ENCODE measurements at regions of chr17 and their contacts with region 1.

Region 1: DNA sequence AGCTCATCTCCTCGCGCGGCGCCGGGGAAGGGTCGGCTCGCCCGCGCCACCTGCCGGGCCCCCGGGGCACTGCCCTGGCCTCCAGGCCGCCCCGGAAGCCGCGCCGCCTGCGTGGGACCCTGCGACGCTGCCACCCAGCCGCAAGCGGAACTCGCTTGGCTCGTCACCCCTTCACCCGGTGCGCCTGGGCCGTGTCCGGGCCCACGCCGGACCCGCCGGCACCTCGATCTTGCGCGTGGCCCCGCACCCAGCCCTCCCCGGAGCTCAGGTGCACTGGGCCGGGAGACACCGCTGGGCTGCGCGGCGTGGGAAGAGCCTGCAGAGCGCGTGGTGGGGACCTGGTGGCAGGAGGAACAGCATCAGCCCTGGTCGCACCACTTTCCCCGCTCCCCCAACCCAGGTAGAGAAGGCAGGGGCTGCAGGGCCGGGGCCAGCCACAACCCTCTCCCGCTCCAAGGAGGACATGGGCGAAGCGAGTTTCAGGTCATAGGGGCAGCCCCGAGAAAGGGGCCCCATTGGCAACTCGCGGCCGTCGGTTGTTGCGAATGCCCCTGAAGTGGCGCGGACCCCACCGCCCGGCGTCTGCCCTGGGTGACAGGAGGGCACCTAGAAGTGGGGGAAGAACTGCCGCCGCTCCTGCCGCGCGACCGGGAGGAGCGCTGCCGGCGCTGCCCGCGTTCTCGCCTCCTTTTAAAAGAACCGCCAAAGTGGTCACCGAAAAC is 363 bp upstream of the MIF4GD start:
- DNase-seq: peak; percentile 58 to 72
- ATAC-seq: peak; percentile 77 to 82
- H3K4me3 ChIP-seq: peak overlapping the region; percentile 82 to 100 (median 90)
- H3K27ac ChIP-seq: peak overlapping the region; percentile 90 to 100 (median 96)
- H3K4me1 ChIP-seq: peaks cover 18 to 33% of the 10 kb centered on the region in 2 donors
- H3K27me3 ChIP-seq: no peaks in the 10 kb centered on the region
- CTCF ChIP-seq: peak in 4 of 5 experiments; percentile 95 to 100 (median 98)
- POLR2A ChIP-seq: no peak

Region 2: GRCh38 chr17:75114552-75115314 is 156.7 kb before region 1 on chr17:
- in situ Hi-C with region 1: no loop called
- intact Hi-C with region 1: loop called (anchors 1 kb)
- DNase-seq: no peak
- ATAC-seq: no peak
- H3K4me3 ChIP-seq: peak overlapping the region; percentile 52 to 75 (median 65)
- H3K27ac ChIP-seq: peak overlapping the region; percentile 77 to 86 (median 82)
- H3K4me1 ChIP-seq: peaks cover 11 to 28% of the 10 kb centered on the region in 2 donors
- H3K27me3 ChIP-seq: no peaks in the 10 kb centered on the region
- CTCF ChIP-seq: no peak
- POLR2A ChIP-seq: no peak

Region 3: GRCh38 chr17:75241996-75242460 is 29.4 kb before region 1 on chr17:
- in situ Hi-C with region 1: no loop called
- intact Hi-C with region 1: loop called (anchors 1 kb)
- DNase-seq: peak; percentile 61 to 91
- ATAC-seq: peak; percentile 76 to 78
- H3K4me3 ChIP-seq: no peak overlapping the region
- H3K27ac ChIP-seq: peak overlapping the region; percentile 72 to 87 (median 78)
- H3K4me1 ChIP-seq: peaks cover 9 to 26% of the 10 kb centered on the region in 2 donors
- H3K27me3 ChIP-seq: no peaks in the 10 kb centered on the region
- CTCF ChIP-seq: no peak
- POLR2A ChIP-seq: no peak

Region 4: GRCh38 chr17:75289115-75289831 is 17.9 kb after region 1 on chr17 and contains the start of gene SLC25A19:
- in situ Hi-C with region 1: no loop called
- intact Hi-C with region 1: loop called (anchors 2 kb)
- DNase-seq: peak; percentile 99
- ATAC-seq: peak; percentile 95 to 98
- H3K4me3 ChIP-seq: peak within 1 kb of the TSS; percentile 84 to 92 (median 86)
- H3K27ac ChIP-seq: peak within 1 kb of the TSS; percentile 88 to 96 (median 94)
- H3K4me1 ChIP-seq: peaks cover 8 to 9% of the 10 kb centered on the region in 2 donors
- H3K27me3 ChIP-seq: no peaks in the 10 kb centered on the region
- CTCF ChIP-seq: no peak
- POLR2A ChIP-seq: peak; percentile 93 to 98
- total RNA-seq, gene SLC25A19: 6.1 to 18.7 (median 14.4) TPM